ENCODE measurements at regions of chr3 and their contacts with region 1.

Region 1: GRCh38 chr3:148075763-148076716 is 621.7 kb upstream of the AGTR1 start:
- DNase-seq: peak in 1 of 2 experiments; percentile 7
- H3K4me3 ChIP-seq: no peak overlapping the region
- H3K27ac ChIP-seq: no peak overlapping the region
- H3K4me1 ChIP-seq: no peaks in the 10 kb centered on the region; a peak in 1 of 7 replicates
- H3K27me3 ChIP-seq: no peaks in the 10 kb centered on the region
- CTCF ChIP-seq: peak in 2 of 3 experiments; percentile 65 to 73; a peak in 3 of 4 replicates
- EP300 ChIP-seq: no peak
- POLR2A ChIP-seq: no peak
- RAD21 ChIP-seq: peak; percentile 84 to 90

Region 2: GRCh38 chr3:147945968-147946519 is 130.0 kb before region 1 on chr3:
- CTCF ChIA-PET with region 1: interaction called, 10 read pairs
- POLR2A ChIA-PET with region 1: no interaction called
- DNase-seq: no peak
- H3K4me3 ChIP-seq: no peak overlapping the region
- H3K27ac ChIP-seq: no peak overlapping the region
- H3K4me1 ChIP-seq: peaks cover 0 to 3% (median 3%) of the 10 kb centered on the region in 4 experiments; a peak in 4 of 7 replicates
- H3K27me3 ChIP-seq: no peaks in the 10 kb centered on the region
- CTCF ChIP-seq: peak; percentile 18 to 59 (median 29); a peak in 3 of 4 replicates
- EP300 ChIP-seq: no peak
- POLR2A ChIP-seq: no peak
- RAD21 ChIP-seq: peak; percentile 29 to 45; a peak in 3 of 4 replicates

Region 3: DNA sequence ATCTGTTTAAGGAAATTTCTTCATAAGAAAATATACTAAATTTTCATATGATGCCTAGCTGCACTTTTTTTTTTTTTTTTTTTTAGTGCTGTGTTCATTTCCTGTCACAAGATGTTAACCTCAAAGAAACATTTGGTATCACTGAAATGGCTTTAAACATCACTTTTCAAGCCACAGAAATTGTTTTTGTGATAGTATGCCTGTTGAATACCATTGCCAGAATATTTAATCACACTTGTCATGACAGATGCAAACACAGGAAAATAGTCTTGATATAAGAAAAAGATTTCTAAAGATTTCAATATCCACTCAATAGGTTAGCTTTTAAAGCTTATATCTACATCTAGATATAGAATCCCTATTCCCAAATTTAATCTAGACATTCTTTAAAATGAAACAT is 13.1 kb after region 1 on chr3:
- CTCF ChIA-PET with region 1: interaction called, 26 read pairs
- POLR2A ChIA-PET with region 1: no interaction called
- DNase-seq: no peak
- H3K4me3 ChIP-seq: no peak overlapping the region
- H3K27ac ChIP-seq: no peak overlapping the region
- H3K4me1 ChIP-seq: no peaks in the 10 kb centered on the region; a peak in 1 of 7 replicates
- H3K27me3 ChIP-seq: no peaks in the 10 kb centered on the region
- CTCF ChIP-seq: no peak
- EP300 ChIP-seq: no peak
- POLR2A ChIP-seq: no peak
- RAD21 ChIP-seq: no peak

Region 4: GRCh38 chr3:148135087-148135486 is 59.0 kb after region 1 on chr3:
- CTCF ChIA-PET with region 1: no interaction called
- POLR2A ChIA-PET with region 1: no interaction called
- DNase-seq: no peak
- H3K4me3 ChIP-seq: no peak overlapping the region
- H3K27ac ChIP-seq: no peak overlapping the region
- H3K4me1 ChIP-seq: no peaks in the 10 kb centered on the region
- H3K27me3 ChIP-seq: no peaks in the 10 kb centered on the region
- CTCF ChIP-seq: no peak
- EP300 ChIP-seq: no peak
- POLR2A ChIP-seq: no peak
- RAD21 ChIP-seq: no peak

Region 5: DNA sequence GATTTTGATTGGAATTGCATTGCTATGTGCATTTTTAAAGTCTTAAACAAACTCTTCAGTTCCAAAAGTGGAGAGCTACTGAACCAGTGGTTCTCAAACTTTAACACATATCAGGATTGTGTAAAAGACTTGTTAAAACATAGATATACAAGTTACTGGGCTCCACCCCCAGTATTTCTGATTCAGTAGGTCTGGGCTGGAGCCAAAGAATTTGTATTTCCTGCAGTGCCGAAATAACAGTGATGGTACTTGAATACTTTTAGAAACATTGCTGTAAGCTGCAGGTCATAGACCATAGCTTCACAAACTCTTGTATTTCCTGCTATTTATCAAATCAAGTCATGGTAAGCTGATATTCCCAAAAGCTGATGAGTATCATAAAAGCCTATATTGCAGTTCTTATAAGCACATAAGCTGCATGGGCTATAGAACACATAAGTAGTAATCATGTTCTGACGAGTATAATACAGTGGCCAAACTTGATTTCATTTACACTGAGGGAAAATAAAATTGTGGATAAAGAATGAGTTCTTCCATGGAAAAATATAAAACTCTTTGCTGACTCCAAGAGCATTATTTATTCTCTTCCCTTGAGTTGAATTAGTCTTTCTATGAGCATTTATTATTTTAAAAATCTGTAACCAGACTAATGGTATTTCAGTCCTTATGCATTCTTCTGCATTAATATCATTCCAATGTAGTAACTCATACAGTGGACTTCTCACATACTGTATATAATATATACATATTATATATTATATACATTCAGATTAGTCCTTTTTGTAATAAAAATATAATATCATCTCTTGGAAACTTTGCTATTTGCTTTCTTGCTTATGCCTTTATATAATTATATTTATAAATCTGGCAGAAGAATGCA is 71.1 kb after region 1 on chr3:
- CTCF ChIA-PET with region 1: no interaction called
- POLR2A ChIA-PET with region 1: no interaction called
- DNase-seq: no peak
- H3K4me3 ChIP-seq: no peak overlapping the region
- H3K27ac ChIP-seq: no peak overlapping the region
- H3K4me1 ChIP-seq: peaks cover 0 to 8% (median 3%) of the 10 kb centered on the region in 4 experiments; a peak in 2 of 7 replicates
- H3K27me3 ChIP-seq: no peaks in the 10 kb centered on the region
- CTCF ChIP-seq: no peak
- EP300 ChIP-seq: no peak
- POLR2A ChIP-seq: no peak
- RAD21 ChIP-seq: no peak

Measured in H1 (cell line).